ENCODE measurements at regions of chr6 and their contacts with region 1.

Region 1: GRCh38 chr6:157928428-157928827 is 53.2 kb upstream of the SYNJ2 start:
- DNase-seq: no peak

Region 2: DNA sequence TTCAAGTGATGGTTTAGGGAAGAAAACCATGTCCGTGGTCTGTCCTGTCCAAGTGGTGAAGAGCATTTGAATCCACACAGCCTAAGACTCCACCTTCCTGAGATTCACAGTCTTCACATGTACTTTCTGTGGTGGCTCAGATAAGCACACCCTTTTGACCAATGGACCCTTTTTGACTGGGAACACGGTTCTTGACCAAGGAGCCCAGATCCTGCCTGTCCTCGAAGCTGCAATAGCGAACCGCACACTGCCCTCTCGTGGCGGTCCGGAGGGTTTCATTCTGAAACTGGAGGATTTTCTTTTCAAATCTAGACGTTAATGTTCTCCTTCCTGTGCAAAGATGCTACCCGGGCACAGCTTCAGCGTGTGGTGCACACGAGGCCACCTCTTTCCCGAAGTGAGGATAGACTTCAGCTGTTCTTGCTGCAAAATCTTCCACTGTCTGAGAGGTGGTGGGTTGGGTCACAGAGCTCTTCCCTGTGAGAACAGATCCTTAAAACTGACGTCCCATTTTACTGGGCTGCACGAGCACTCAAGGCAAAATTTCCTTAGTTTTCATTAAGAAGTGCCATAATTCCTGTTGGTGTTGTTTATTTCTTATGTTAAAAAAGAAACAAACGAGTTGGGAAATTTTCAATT is 143.8 kb after region 1 on chr6:
- intact Hi-C with region 1: loop called in 1 of 2 experiments (anchors 10 kb)
- DNase-seq: peak; percentile 92

Region 3: DNA sequence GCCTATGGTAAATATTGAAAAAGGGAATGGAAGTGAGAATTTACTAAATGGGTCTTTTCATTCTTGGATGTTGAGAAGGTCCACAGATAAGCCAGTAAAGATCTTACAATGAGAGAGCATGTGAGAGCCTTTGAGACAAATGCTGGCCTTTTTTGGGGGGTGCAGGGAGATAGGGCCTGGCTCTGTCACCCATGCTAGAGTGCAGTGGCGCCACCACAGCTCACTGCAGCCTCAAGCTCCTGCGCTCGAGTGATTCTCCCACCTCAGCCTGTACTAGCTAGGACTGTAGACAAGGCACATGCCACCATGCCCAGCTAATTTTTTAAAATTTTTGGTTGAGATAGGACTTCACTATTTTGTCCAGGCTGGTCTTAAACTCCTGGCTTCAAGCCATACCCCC is 568.3 kb after region 1 on chr6:
- intact Hi-C with region 1: loop called in 1 of 2 experiments (anchors 5 kb)
- DNase-seq: no peak

Region 4: DNA sequence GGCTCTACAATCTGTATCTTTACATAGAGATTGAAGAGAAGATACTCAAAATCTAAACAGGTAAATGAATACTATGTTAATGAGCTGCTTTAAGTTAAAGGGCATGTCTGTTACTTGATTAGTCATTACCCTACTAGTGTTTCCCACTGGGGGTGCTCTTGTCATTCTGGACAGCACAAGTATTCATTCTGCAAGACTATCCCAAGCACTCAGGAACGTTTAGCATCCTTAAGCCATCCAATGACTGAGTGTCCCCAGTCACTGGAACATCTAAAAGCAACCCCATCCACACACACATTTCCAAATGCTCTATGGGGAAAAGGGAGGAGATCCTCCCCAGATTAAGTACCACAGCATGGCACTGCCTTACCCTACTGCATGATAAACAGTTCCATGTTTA is 865.0 kb after region 1 on chr6:
- intact Hi-C with region 1: no loop called
- DNase-seq: no peak